ENCODE measurements at regions of chr1 and their contacts with region 1.

Region 1: DNA sequence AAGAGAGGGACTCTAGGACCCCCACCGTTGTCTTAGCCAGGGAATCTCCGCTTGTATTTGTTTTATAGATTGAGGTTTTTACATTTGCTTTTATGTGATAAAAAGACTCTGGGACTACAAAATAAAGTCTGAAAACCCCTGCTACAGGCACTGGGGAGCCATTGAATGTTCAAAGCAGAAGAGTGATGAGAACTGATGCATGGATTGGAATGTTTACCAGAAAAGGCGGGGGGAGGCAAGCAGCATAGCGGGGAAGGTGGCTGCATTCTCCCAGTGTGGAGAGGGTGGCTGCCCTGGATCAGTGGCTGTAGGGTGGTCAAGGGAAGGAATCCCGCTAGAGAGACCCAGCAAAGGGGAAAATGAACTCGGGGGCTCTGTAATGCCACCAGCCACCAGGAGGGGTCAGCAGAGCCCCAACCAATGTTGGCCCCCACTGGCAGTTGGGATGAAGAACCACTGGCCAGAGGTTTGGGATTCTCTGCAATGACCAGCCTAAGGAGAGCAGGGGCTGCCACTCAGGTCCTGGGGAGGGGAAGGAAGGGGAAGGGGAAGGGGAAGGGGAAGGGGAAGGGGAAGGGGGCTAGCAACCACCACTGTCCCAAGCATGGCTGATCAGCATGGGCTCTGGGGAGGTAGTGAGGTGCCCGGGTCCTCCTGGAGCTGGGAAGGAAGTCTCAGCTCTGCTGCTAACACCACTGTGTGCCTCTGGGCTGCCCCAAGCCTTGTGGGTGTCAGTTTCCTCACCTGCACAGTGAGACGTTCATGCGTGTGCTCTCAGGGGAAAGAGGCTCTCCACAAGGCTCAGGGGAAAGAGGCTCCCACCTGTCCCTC is 19.2 kb upstream of the PEF1 start:
- DNase-seq: peak; percentile 69
- ATAC-seq: peak; percentile 71

Region 2: GRCh38 chr1:31564134-31564989 is 99.5 kb before region 1 on chr1:
- intact Hi-C with region 1: no loop called
- DNase-seq: no peak
- ATAC-seq: peak; percentile 65

Region 3: GRCh38 chr1:31789259-31790065 is 125.6 kb after region 1 on chr1:
- intact Hi-C with region 1: loop called (anchors 2 kb)
- DNase-seq: peak; percentile 98
- ATAC-seq: peak; percentile 95

Region 4: GRCh38 chr1:32063261-32063681 is 399.4 kb after region 1 on chr1:
- intact Hi-C with region 1: loop called (anchors 10 kb)
- DNase-seq: no peak
- ATAC-seq: peak; percentile 26